CD4-positive, alpha-beta T cell (primary cell): ENCODE measurements at regions of chr7 and their contacts with region 1.

Region 1: GRCh38 chr7:15947754-15948153 is 261.3 kb upstream of the MEOX2 start:
- DNase-seq: no peak
- ATAC-seq: no peak
- H3K4me3 ChIP-seq: no peak overlapping the region
- H3K4me3 Mint-ChIP-seq: no peak overlapping the region
- H3K27ac ChIP-seq: no peak overlapping the region
- H3K27ac Mint-ChIP-seq: no peak overlapping the region
- H3K4me1 ChIP-seq: no peaks in the 10 kb centered on the region
- H3K4me1 Mint-ChIP-seq: no peaks in the 10 kb centered on the region
- H3K27me3 ChIP-seq: no peaks in the 10 kb centered on the region
- H3K27me3 Mint-ChIP-seq: no peaks in the 10 kb centered on the region
- CTCF ChIP-seq: no peak

Region 2: DNA sequence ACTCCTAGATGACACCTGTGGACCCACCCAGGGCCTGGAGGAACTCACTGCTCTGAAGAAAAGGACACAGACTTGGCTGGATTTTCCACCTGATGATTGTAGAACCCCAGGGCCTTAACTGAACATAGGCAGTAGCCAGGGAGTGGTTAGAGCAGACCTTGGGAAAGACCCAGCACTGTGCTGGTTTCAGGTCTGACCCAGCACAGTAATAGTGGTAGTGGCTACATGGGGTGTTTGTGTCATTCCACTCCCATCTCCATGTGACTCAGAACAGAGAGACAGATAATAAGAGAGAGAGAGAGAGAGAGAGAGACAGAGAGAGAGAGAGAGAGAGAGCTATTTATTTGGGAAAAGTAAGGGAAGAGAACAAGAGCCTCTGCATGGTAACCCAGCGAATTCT is 22.1 kb before region 1 on chr7:
- CTCF ChIA-PET with region 1: interaction called, 3 read pairs
- POLR2A ChIA-PET with region 1: no interaction called
- intact Hi-C with region 1: loop called in 1 of 2 experiments (anchors 2 kb)
- DNase-seq: no peak
- ATAC-seq: no peak
- H3K4me3 ChIP-seq: no peak overlapping the region
- H3K4me3 Mint-ChIP-seq: no peak overlapping the region
- H3K27ac ChIP-seq: no peak overlapping the region
- H3K27ac Mint-ChIP-seq: no peak overlapping the region
- H3K4me1 ChIP-seq: no peaks in the 10 kb centered on the region
- H3K4me1 Mint-ChIP-seq: no peaks in the 10 kb centered on the region
- H3K27me3 ChIP-seq: no peaks in the 10 kb centered on the region
- H3K27me3 Mint-ChIP-seq: no peaks in the 10 kb centered on the region
- CTCF ChIP-seq: no peak

Region 3: DNA sequence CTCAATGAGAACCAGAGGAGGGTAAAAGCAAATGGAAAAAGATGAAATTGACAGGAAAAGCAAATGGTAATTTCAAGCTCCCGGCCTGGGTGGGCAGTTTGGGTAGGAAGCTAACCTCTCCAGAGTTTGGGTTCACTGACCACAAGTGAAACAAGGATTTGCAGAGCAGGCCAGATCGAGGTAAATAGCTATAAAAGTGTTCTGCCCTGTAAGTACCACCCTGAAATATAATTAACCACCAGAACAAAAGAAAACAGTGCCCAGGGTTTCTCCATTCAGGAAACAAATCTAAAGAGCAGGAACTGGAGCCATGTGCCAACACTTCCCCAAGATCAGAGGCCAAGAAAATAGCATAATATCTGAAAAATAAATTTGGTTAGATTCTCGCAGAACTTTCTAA is 15.5 kb after region 1 on chr7:
- CTCF ChIA-PET with region 1: no interaction called
- POLR2A ChIA-PET with region 1: no interaction called
- intact Hi-C with region 1: no loop called
- DNase-seq: no peak
- ATAC-seq: no peak
- H3K4me3 ChIP-seq: no peak overlapping the region
- H3K4me3 Mint-ChIP-seq: no peak overlapping the region
- H3K27ac ChIP-seq: no peak overlapping the region
- H3K27ac Mint-ChIP-seq: no peak overlapping the region
- H3K4me1 ChIP-seq: no peaks in the 10 kb centered on the region
- H3K4me1 Mint-ChIP-seq: no peaks in the 10 kb centered on the region
- H3K27me3 ChIP-seq: no peaks in the 10 kb centered on the region
- H3K27me3 Mint-ChIP-seq: no peaks in the 10 kb centered on the region
- CTCF ChIP-seq: no peak

Region 4: GRCh38 chr7:16046041-16046440 is 98.3 kb after region 1 on chr7:
- CTCF ChIA-PET with region 1: no interaction called
- POLR2A ChIA-PET with region 1: no interaction called
- intact Hi-C with region 1: no loop called
- DNase-seq: no peak
- ATAC-seq: no peak
- H3K4me3 ChIP-seq: no peak overlapping the region
- H3K4me3 Mint-ChIP-seq: no peak overlapping the region
- H3K27ac ChIP-seq: no peak overlapping the region
- H3K27ac Mint-ChIP-seq: no peak overlapping the region
- H3K4me1 ChIP-seq: no peaks in the 10 kb centered on the region
- H3K4me1 Mint-ChIP-seq: no peaks in the 10 kb centered on the region
- H3K27me3 ChIP-seq: no peaks in the 10 kb centered on the region
- H3K27me3 Mint-ChIP-seq: no peaks in the 10 kb centered on the region
- CTCF ChIP-seq: no peak